Left lung (tissue), 14 donors: ENCODE measurements at regions of chr15 and their contacts with region 1.

Region 1: DNA sequence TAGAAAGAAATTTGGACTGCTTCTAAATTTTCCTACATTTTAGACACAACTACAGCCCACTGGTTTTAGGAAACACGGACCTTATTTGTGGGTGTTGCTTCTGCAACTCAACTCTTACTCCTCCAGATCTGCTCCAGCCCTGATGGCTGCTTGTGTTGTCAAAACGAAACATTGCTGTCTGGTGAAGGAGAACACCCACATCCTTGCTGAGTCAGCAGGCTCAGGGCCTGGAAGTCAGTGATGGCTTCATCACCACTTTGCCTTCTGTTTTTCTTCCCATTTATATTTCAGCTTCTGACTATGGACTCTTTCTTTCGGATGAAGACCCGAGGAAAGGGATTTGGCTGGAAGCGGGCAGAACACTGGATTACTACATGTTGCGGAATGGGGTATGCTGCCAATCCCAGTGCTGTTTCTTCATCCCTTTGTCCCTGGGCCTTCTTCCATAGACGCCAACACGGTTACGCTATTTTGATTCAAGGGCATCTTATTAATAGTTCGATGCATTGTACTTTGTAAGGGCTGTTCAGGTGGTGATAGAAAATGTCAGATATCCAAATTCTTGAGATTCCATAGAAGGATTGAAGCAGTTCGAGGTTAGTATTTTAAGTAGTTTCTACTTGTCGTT is 392.6 kb upstream of the TPM1 start:
- DNase-seq: peak in 1 of 4 donors; percentile 52
- ATAC-seq: peak; percentile 60
- H3K4me3 ChIP-seq: no peak overlapping the region
- H3K27ac ChIP-seq: peak overlapping the region in 1 of 2 donors; percentile 13
- H3K4me1 ChIP-seq: peaks cover 0 to 15% of the 10 kb centered on the region in 2 donors
- H3K27me3 ChIP-seq: no peaks in the 10 kb centered on the region
- CTCF ChIP-seq: no peak

Region 2: DNA sequence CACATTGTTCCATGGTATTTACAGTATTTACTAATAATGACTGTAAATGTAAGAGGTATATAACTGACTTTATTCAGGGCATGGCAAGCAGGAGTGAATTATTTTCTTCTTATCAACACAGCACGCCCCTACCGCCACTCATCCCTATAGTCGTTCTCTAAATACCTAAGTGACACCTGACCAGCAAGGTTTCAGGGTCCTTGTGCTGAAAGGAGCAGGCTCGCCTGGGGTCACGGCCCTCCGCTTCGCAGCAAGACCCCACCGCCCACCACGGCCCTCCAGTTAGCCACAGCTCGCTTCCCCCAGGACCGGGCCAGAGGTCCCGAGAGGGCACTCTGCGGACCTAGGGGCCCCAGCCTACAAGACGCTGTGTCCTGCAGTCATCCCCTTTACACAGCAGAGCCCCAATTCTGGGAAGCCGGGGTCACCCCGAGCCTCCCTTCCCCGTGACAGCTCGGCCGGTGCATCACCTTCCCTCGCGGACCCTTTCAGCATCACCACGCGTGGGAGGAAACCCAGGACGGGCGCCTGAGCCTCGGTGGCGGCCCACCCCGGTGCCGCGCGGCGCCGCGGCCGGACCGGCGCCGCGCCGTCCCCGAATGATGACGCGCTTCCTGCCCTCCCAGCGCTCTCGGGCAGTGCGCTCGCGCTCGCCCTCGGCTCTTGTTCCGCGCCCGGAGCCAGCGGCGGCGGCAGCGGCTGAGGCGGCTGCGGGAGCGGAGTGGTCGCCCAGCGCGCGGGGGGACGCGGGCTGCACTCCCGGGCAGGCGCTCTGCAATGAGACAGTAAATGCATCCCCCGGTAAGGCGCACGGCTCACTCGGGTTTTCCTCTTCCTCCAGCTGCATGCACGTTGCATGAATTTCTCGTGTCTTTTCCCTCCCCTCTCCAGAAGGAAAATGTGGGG is 259.8 kb before region 1 on chr15:
- intact Hi-C with region 1: loop called in 1 of 2 experiments (anchors 10 kb)
- DNase-seq: peak; percentile 66 to 90 (median 85)
- ATAC-seq: peak; percentile 86
- H3K4me3 ChIP-seq: peak within 1 kb of the TSS; percentile 79 to 89
- H3K27ac ChIP-seq: peak within 1 kb of the TSS; percentile 53 to 76
- H3K4me1 ChIP-seq: peaks cover 4 to 31% of the 10 kb centered on the region in 2 donors
- H3K27me3 ChIP-seq: peaks cover 0 to 34% of the 10 kb centered on the region in 2 donors
- CTCF ChIP-seq: no peak

Region 3: DNA sequence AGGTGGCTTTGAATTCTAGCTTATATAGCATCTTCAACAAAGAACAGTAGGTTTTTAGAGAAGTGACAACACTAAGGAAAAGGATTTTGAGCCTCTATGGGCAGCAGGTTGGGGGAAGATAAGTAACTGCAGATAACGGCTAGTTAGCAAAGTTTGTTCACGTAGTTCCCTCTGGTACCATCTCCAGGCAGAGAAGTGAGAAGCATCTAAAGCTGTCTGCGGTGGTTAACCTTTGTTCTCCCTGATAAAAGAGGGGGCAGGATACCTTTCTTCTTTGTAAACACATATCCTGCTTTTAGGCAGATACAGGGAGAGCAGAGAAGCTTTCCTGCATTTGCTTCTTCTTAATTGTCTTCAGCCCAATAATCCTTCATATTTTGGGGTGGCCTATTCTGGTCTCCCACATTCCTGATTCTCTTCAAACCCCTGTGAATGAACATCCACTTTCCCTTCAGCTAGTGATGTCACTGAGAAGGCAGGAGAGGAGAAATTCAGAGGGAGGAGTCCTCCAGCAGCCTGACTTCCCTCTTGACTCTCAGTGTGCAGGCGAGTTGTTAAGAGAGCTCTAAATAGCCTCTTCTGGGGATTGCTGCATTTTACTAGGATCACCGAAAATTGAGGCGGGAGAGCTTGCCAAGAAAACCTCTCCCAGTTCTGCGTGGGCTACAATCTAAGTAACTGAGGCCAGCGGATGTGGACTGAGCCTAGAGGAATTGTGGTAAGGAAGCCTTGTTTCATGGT is 91.1 kb before region 1 on chr15:
- intact Hi-C with region 1: no loop called
- DNase-seq: peak in 2 of 4 donors; percentile 40 to 42
- ATAC-seq: peak; percentile 89
- H3K4me3 ChIP-seq: no peak overlapping the region
- H3K27ac ChIP-seq: no peak overlapping the region
- H3K4me1 ChIP-seq: peaks cover 0 to 8% of the 10 kb centered on the region in 2 donors
- H3K27me3 ChIP-seq: peaks cover 0 to 6% of the 10 kb centered on the region in 2 donors
- CTCF ChIP-seq: no peak

Region 4: GRCh38 chr15:62706317-62706716 is 56.4 kb after region 1 on chr15:
- intact Hi-C with region 1: no loop called
- DNase-seq: no peak
- ATAC-seq: no peak
- H3K4me3 ChIP-seq: no peak overlapping the region
- H3K27ac ChIP-seq: no peak overlapping the region
- H3K4me1 ChIP-seq: no peaks in the 10 kb centered on the region
- H3K27me3 ChIP-seq: no peaks in the 10 kb centered on the region
- CTCF ChIP-seq: no peak

Region 5: DNA sequence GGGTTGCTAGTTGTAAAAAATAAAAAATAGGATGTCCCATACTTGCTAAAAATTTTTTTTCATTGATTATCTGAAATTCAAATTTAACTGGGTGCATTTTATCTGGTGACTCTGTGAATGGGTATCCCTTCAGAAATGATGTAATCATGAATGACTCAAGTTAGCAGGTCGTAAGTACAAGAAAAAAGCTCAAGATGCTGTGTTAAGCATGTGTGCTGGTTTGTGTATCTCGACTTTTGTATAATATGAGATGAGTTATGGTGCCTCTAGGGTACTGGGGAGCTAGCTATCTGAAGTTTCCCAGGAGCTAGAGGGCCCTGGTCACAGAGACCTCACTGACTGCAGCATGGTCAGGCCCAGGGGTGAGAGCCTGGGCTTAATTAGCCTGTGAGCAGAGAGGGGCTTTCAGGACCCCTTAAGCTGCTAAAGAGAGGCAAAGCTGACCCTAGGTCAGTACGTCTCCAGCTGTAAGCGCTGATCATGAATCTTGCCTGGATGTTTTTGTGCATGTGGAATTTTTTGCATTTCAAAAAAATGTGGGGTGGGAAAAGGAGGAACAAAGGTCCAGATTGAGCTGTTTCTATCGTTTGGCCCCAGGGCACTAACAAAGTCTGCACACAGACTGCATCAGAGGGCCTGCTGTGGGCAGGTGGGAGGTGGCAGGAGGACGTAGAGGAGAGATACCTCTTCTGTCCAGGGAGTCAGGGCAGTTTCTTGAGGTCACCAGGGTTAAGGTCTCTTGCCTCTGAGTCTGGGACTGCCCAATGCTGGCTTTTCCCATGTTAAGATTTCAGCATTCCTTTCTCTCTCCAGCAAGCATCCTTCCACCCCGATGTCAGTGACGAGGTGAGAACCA is 159.4 kb after region 1 on chr15:
- intact Hi-C with region 1: no loop called
- DNase-seq: no peak
- ATAC-seq: no peak
- H3K4me3 ChIP-seq: no peak overlapping the region
- H3K27ac ChIP-seq: no peak overlapping the region
- H3K4me1 ChIP-seq: no peaks in the 10 kb centered on the region
- H3K27me3 ChIP-seq: no peaks in the 10 kb centered on the region
- CTCF ChIP-seq: no peak